ENCODE measurements at regions of chr12 and their contacts with region 1.

Region 1: DNA sequence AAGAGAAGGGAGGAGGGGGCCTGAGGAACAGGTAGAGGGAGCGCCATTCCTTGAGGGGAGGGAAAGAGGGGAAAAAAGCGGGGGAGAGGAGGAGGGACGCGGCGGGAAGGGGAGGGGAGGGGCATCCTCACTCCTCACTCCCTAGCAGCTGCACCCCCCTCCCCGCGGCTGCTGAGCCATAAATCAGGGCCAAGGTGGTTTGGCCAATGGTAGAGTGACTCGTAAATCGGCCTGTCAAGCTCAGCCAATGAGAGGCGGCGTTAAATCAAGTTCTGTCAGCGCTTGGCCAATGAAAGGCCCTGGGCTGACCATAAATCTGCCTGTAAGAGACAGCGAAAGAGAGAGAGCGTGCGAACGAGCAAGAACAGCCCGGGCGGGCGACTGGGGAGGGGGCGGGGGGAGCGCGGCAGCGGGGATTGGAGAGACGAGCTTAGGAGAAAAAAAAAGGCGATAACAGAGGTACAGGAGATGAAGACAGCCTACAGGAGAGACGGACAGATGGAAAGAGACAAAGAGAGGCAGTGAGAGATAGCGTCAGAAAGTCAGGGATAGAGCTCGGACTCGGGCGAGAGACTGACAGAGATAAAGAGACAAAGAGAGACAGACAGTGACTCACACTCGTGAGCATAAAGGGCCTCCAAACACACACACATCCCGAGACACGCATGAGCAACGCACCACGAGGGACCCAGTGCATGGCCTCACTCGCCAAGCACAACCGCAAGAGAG is 5.1 kb downstream of the GPR84 start:
- DNase-seq: peak; percentile 95
- CTCF ChIP-seq: no peak

Region 2: DNA sequence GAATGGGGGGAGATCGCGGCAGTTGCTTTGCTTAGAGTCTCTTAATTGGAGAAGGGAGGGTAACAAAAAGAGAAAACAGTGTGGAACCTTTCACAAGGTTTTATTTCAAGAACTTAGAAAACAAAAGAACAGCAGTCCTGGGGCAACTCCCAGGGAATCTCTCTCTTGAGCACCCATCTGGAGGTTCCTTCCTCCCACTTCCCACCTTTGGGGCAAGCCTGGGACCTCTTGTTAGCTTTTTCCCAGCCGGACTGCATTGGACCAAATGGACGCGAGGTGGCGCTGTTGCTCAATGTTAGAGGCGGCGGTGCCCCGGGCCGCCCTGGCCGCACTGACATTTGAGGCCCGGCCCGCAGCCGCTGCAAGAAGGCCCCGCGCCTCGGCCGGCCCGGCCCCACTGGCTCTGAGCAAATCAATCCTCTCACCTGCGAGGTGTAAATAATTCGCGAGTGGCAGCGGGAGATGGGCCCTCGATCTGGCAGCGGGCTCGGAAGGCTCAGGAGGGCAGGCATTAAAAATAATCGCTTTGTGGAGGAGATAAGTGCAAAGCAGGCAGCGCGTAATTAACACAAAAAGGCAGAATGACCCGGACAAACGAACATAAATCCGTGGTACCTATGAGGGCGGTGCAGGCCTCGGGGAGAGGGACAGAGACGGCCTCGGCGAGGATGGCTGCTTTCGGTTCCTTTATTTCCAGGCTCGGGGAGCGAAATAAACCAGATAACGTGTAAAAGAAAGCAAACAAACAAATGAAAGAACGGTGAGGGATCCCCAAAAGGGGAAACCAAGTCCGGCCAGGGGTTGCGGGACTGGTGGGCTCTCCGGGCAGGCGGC is 353.1 kb before region 1 on chr12:
- in situ Hi-C with region 1: loop called (anchors 25 kb)
- DNase-seq: peak; percentile 89
- CTCF ChIP-seq: peak; percentile 95

Measured in GM13977 (cell line).